AG04449 (cell line): ENCODE measurements at regions of chr1 and their contacts with region 1.

Region 1: DNA sequence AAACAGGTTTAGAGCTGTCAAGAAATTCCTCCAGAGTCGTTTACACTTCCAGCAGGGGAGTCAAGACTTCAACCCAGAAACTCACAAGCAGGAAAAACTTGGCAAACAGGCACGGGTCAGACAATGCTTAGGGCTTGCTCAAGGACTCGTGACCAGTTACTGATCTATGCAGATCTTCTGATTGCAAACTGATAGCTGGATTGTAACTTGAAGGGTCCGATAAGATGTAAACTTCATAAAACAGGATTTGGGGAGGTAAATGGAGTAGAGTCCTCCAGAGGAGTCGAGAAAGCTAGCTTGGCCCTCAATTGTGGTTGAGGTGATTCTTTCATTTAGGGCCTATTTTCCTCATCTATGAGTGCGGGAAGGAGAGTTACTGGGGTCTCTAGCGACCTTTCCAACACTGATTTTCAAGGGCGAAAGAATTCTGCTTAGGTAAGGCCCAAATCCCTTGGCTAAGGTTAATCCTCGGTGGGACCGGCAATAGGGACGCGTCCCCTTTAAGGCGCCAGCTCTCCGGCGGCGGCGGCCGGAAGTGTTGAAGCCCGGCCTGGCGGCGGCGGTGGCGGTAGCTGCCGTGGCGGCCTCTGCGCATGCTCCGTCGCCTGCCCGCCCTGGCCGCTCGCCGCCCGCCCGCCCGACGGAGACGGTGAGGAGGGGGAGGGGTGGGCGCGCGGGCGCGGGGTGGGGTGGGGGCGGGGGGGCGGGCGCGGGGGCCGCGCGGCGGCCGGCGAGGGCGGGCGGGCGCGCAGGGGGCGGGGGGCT is at the start of gene GMEB1:
- DNase-seq: no peak
- H3K4me3 ChIP-seq: peak within 1 kb of the TSS; percentile 80
- CTCF ChIP-seq: no peak

Region 2: GRCh38 chr1:28648474-28649198 is 19.7 kb before region 1 on chr1 and contains the start of gene RNU11:
- CTCF ChIA-PET with region 1: interaction called, 3 read pairs
- POLR2A ChIA-PET with region 1: interaction called, 28 read pairs
- DNase-seq: peak; percentile 95
- H3K4me3 ChIP-seq: peak within 1 kb of the TSS; percentile 57
- CTCF ChIP-seq: no peak